ENCODE measurements at regions of chr6 and their contacts with region 1.

Region 1: GRCh38 chr6:27146706-27147505 is 100.6 kb upstream of the PRSS16 start:
- DNase-seq: peak; percentile 99
- H3K4me3 ChIP-seq: peak overlapping the region in 2 of 3 experiments; percentile 21 to 46
- H3K27ac ChIP-seq: peak overlapping the region; percentile 66
- H3K4me1 ChIP-seq: peaks cover 5% of the 10 kb centered on the region
- H3K27me3 ChIP-seq: peaks cover 0 to 1% of the 10 kb centered on the region in 2 experiments
- CTCF ChIP-seq: no peak
- POLR2A ChIP-seq: peak; percentile 95

Region 2: GRCh38 chr6:27132532-27133280 is 14.2 kb before region 1 on chr6:
- CTCF ChIA-PET with region 1: interaction called, 31 read pairs
- POLR2A ChIA-PET with region 1: interaction called, 107 read pairs
- dilution Hi-C with region 1: no loop called
- intact Hi-C with region 1: loop called (anchors 1 kb)
- DNase-seq: peak; percentile 100
- H3K4me3 ChIP-seq: peak overlapping the region; percentile 37 to 81 (median 59)
- H3K27ac ChIP-seq: peak overlapping the region; percentile 86
- H3K4me1 ChIP-seq: peaks cover 19% of the 10 kb centered on the region
- H3K27me3 ChIP-seq: no peaks in the 10 kb centered on the region
- CTCF ChIP-seq: no peak
- POLR2A ChIP-seq: peak; percentile 76

Region 3: GRCh38 chr6:27237089-27237803 is 90.3 kb after region 1 on chr6:
- CTCF ChIA-PET with region 1: no interaction called
- POLR2A ChIA-PET with region 1: no interaction called
- dilution Hi-C with region 1: no loop called
- intact Hi-C with region 1: no loop called
- DNase-seq: peak; percentile 30
- H3K4me3 ChIP-seq: peak overlapping the region in 2 of 3 experiments; percentile 61 to 65
- H3K27ac ChIP-seq: no peak overlapping the region
- H3K4me1 ChIP-seq: peaks cover 12% of the 10 kb centered on the region
- H3K27me3 ChIP-seq: peaks cover 0 to 3% of the 10 kb centered on the region in 2 experiments
- CTCF ChIP-seq: no peak
- POLR2A ChIP-seq: no peak

Region 4: DNA sequence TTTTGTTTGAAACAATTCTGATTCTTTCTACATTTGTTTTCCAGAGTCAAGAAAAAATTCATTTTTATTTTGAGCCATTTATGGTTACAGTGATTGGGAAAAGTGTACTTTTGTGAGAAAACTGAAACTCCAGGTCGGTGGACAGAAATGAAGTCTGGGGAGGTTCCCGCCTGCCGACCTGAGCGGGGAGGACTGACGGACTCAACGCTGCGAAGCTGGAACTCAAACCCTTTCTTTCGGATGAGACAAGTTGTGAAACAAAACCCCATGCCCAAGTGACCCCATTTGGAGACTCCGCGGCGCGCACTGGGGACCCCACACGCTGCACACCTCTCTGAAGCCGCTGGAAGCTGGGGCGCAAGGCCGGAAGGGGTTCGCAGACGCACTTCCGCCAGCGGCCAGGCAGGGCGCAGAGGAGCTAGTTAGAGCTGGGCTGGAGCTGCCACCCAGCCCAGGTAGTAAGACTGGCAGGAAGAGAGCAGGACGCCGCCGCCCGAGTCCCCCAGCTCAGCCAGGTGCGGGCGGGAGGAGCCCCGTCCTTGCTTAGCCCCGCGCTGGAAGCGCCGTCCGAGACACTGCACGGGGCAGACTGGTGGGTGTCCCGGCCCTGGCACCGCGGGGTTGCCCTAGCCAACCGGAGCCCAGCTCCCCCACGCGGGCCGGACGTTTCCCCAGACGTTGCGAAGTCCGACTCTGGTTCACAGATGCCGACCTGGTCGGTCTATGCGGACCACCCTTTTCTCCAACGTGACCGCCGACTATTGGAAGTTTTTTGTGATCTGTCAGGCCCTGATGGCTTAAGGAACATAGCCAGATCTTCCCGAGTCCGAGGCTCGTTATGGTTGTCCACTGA is 957.7 kb after region 1 on chr6:
- CTCF ChIA-PET with region 1: no interaction called
- POLR2A ChIA-PET with region 1: interaction called, 11 read pairs
- dilution Hi-C with region 1: no loop called
- intact Hi-C with region 1: no loop called
- DNase-seq: peak; percentile 72
- H3K4me3 ChIP-seq: peak overlapping the region; percentile 47 to 72 (median 70)
- H3K27ac ChIP-seq: no peak overlapping the region
- H3K4me1 ChIP-seq: peaks cover 6% of the 10 kb centered on the region
- H3K27me3 ChIP-seq: no peaks in the 10 kb centered on the region
- CTCF ChIP-seq: peak; percentile 29 to 55
- POLR2A ChIP-seq: peak; percentile 75